ENCODE measurements at regions of chr19 and their contacts with region 1.

Region 1: GRCh38 chr19:8321060-8321985 is at the starts of genes NDUFA7 and RPS28:
- DNase-seq: peak; percentile 79 to 98
- H3K4me3 ChIP-seq: peak within 1 kb of the TSS; percentile 64 to 97
- H3K27ac ChIP-seq: peak within 1 kb of the TSS; percentile 80 to 90
- H3K4me1 ChIP-seq: peaks cover 12 to 22% of the 10 kb centered on the region in 2 donors
- H3K27me3 ChIP-seq: no peaks in the 10 kb centered on the region
- CTCF ChIP-seq: peak in 2 of 3 experiments; percentile 26 to 31
- total RNA-seq, gene NDUFA7: 11.8 TPM
- total RNA-seq, gene RPS28: 393 TPM

Region 2: DNA sequence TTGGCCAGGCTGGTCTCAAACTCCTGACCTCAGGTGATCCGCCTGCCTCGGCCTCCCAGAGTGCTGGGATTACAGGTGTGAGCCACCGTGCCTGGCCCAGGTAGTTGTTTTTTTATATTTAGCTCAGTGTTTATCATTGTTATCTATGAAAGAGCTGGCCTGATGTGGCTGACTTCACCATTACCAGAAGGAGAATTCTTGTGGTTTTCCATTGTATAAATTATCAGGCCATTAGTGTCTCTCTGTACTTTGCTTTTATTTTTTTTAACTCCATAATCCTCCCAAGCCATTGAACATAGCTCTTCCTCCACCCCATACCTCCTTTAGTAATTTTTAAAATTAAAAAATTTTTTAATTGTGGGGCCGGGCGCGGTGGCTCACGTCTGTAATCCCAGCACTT is 88.0 kb before region 1 on chr19:
- intact Hi-C with region 1: no loop called
- DNase-seq: no peak
- H3K4me3 ChIP-seq: no peak overlapping the region
- H3K27ac ChIP-seq: no peak overlapping the region
- H3K4me1 ChIP-seq: no peaks in the 10 kb centered on the region
- H3K27me3 ChIP-seq: no peaks in the 10 kb centered on the region
- CTCF ChIP-seq: no peak

Region 3: GRCh38 chr19:8269724-8270123 is 51.6 kb before region 1 on chr19:
- intact Hi-C with region 1: loop called (anchors 2 kb)
- DNase-seq: no peak
- H3K4me3 ChIP-seq: no peak overlapping the region
- H3K27ac ChIP-seq: no peak overlapping the region
- H3K4me1 ChIP-seq: peaks cover 0 to 3% of the 10 kb centered on the region in 2 donors
- H3K27me3 ChIP-seq: no peaks in the 10 kb centered on the region
- CTCF ChIP-seq: no peak

Region 4: GRCh38 chr19:8307965-8308866 is 13.1 kb before region 1 on chr19 and contains the start of gene CD320:
- intact Hi-C with region 1: loop called (anchors 1 kb)
- DNase-seq: peak; percentile 33 to 94
- H3K4me3 ChIP-seq: peak within 1 kb of the TSS; percentile 58 to 72
- H3K27ac ChIP-seq: peak within 1 kb of the TSS; percentile 50 to 59
- H3K4me1 ChIP-seq: peaks cover 4 to 11% of the 10 kb centered on the region in 2 donors
- H3K27me3 ChIP-seq: no peaks in the 10 kb centered on the region
- CTCF ChIP-seq: no peak
- total RNA-seq, gene CD320: 263 TPM

Region 5: GRCh38 chr19:8355631-8356402 is 34.5 kb after region 1 on chr19:
- intact Hi-C with region 1: no loop called
- DNase-seq: peak; percentile 31 to 92
- H3K4me3 ChIP-seq: no peak overlapping the region
- H3K27ac ChIP-seq: peak overlapping the region; percentile 53
- H3K4me1 ChIP-seq: peaks cover 0 to 20% of the 10 kb centered on the region in 2 donors
- H3K27me3 ChIP-seq: no peaks in the 10 kb centered on the region
- CTCF ChIP-seq: no peak

Region 6: DNA sequence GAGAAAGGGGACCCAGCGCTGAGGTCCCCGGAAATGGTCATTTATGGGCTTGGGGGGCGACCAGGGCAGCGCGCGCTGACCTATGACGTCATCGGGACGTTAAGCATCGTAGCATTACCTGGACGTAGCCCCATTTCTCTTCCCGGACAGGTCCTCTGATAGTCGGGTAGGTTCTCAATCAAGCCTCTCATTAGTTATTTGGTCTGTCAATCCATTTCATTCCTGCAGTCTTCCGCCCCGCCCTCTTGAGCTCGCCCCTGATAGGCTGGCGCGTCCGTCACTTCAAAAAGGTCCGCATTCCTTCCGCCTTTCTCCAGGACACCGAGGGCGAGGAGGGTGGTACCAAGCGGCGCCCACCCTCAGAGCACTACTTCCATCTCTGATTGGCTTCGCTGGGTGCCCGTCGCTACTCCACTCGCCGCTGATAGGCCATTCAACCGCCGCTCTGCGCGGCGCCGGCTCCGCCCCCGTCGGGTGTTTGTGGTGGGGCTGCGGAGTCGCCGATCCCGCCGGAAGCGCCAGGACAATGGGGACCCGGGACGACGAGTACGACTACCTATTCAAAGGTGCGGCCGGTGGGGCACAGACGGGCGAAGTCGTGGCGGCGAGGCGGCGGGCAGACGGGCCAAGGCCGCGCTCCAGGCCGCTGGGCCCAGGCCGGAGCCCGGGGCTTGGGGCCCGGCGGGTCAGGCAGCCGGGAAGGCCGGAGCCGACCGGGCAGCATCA is 68.7 kb after region 1 on chr19 and contains the start of gene RAB11B:
- intact Hi-C with region 1: loop called (anchors 1 kb)
- DNase-seq: peak; percentile 100
- H3K4me3 ChIP-seq: peak within 1 kb of the TSS; percentile 97 to 100
- H3K27ac ChIP-seq: peak within 1 kb of the TSS; percentile 100
- H3K4me1 ChIP-seq: peaks cover 18 to 42% of the 10 kb centered on the region in 2 donors
- H3K27me3 ChIP-seq: no peaks in the 10 kb centered on the region
- CTCF ChIP-seq: no peak
- total RNA-seq, gene RAB11B: 70.8 TPM